Pancreas (tissue), 10 donors: ENCODE measurements at regions of chrX and their contacts with region 1.

Region 1: GRCh38 chrX:35890699-35891098 is 28.8 kb upstream of the CFAP47 start:
- DNase-seq: peak in 4 of 6 donors; percentile 35 to 57 (median 56)
- ATAC-seq: peak; percentile 71 to 97 (median 90)
- H3K4me3 ChIP-seq: no peak overlapping the region
- H3K27ac ChIP-seq: no peak overlapping the region
- H3K4me1 ChIP-seq: no peaks in the 10 kb centered on the region
- H3K27me3 ChIP-seq: peaks cover 0 to 13% (median 4%) of the 10 kb centered on the region in 4 donors
- CTCF ChIP-seq: peak; percentile 5 to 62 (median 52)

Region 2: DNA sequence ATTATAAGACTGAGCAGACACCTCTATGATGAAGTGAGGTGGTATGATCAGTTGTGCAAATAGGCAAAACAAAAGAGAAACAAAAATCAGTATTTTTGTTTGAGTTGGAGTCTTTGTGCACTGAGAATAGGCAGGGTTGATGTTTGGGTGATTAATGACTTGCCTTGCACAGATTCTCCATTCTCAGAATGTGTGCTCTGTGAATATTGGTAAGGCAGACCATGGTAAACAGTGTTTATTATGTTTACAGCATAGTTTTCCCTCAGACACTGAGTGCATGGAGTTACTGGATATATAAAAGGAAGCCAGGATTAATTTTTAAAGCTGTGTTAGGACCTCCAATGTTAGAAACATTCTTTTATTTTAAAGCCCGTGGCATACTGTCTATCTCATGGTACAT is 332.8 kb before region 1 on chrX:
- intact Hi-C with region 1: no loop called
- DNase-seq: no peak
- ATAC-seq: no peak
- H3K4me3 ChIP-seq: no peak overlapping the region
- H3K27ac ChIP-seq: no peak overlapping the region
- H3K4me1 ChIP-seq: peaks cover 0 to 2% (median 0%) of the 10 kb centered on the region in 3 donors
- H3K27me3 ChIP-seq: peaks cover 0 to 3% (median 0%) of the 10 kb centered on the region in 4 donors
- CTCF ChIP-seq: no peak

Region 3: DNA sequence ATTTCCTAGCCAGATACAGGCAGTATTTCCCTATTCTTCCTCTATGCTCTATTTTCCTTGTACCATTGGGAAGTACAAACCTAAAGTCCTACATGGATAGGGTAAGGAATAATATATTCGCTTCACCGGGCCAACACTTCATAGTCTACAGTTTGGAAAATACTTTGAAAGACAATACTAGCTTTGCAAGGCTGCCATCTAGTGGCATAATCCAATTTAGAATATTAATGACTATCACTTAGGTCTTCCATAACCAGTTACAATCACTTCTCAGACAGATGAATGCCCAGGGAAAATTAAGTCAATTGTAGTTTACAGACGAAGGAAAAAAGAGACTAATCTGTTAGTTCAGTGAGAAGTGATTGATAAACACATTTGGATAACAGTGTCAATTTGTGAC is 976.4 kb after region 1 on chrX:
- intact Hi-C with region 1: loop called in 1 of 3 experiments (anchors 10 kb)
- DNase-seq: no peak
- ATAC-seq: peak in 3 of 4 donors; percentile 63 to 82 (median 72)
- H3K4me3 ChIP-seq: no peak overlapping the region
- H3K27ac ChIP-seq: no peak overlapping the region
- H3K4me1 ChIP-seq: no peaks in the 10 kb centered on the region
- H3K27me3 ChIP-seq: peaks cover 0 to 20% (median 2%) of the 10 kb centered on the region in 4 donors
- CTCF ChIP-seq: peak; percentile 29 to 56 (median 42)